Thyroid gland (tissue), 4 donors: ENCODE measurements at regions of chr20 and their contacts with region 1.

Region 1: GRCh38 chr20:32456869-32457478 is 98.8 kb downstream of the ASXL1 start:
- DNase-seq: peak; percentile 58 to 61
- H3K4me3 ChIP-seq: peak overlapping the region in 1 of 3 donors; percentile 37
- H3K27ac ChIP-seq: peak overlapping the region in 2 of 3 donors; percentile 35 to 46
- H3K4me1 ChIP-seq: peaks cover 15 to 17% of the 10 kb centered on the region in 2 donors
- H3K27me3 ChIP-seq: no peaks in the 10 kb centered on the region
- CTCF ChIP-seq: peak; percentile 47 to 90 (median 69)
- POLR2A ChIP-seq: no peak

Region 2: GRCh38 chr20:32207626-32208498 is 249.1 kb before region 1 on chr20 and contains the starts of genes PLAGL2 and POFUT1:
- intact Hi-C with region 1: loop called (anchors 10 kb)
- DNase-seq: peak; percentile 88 to 90
- H3K4me3 ChIP-seq: peak within 1 kb of the TSS; percentile 82 to 90 (median 84)
- H3K27ac ChIP-seq: peak within 1 kb of the TSS; percentile 79 to 90 (median 87)
- H3K4me1 ChIP-seq: peaks cover 42 to 51% of the 10 kb centered on the region in 2 donors
- H3K27me3 ChIP-seq: no peaks in the 10 kb centered on the region
- CTCF ChIP-seq: peak in 3 of 6 experiments; percentile 12 to 37 (median 27)
- POLR2A ChIP-seq: peak in 1 of 2 donors; percentile 88
- total RNA-seq, gene PLAGL2: 6.5 to 11.7 (median 7.3) TPM
- total RNA-seq, gene POFUT1: 35.1 to 40.5 (median 38.5) TPM

Region 3: DNA sequence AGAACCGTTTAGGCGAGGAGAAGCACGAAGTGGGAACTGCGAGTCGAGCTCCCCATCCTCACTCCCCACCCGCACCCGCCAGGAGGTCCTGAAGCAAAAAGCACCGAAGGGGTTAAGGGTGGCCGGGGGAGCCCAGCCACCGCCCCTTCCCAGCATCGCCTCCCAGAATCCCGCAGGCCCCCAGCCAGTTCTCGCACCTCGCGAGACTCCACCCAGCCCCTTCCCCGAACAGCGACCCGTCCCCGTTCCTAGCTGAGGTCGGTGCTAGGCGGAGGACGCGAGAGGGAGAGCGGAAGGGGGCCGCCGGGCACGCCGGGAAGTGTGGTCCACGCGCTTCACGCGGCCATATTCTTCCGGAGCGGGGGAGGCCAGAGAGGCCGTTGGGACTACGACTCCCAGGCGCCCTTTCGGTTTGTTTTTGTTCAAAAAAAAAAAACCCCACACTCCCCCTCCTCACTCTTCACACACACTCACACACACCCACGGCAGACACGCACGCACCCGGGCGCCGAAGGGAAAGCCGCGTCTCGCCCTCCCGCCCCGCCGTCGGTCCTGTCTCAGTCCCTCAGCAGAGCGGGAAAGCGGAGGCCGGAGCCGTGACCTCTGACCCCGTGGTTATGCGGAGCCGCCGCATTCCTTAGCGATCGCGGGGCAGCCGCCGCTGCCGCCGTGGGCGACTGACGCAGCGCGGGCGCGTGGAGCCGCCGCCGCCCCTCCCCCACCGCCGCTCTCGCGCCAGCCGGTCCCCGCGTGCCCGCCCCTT is 98.9 kb before region 1 on chr20 and contains the start of gene ASXL1:
- intact Hi-C with region 1: loop called (anchors 10 kb)
- DNase-seq: peak; percentile 97 to 98
- H3K4me3 ChIP-seq: peak within 1 kb of the TSS; percentile 45 to 89 (median 58)
- H3K27ac ChIP-seq: peak within 1 kb of the TSS; percentile 95 to 97 (median 96)
- H3K4me1 ChIP-seq: peaks cover 30 to 37% of the 10 kb centered on the region in 2 donors
- H3K27me3 ChIP-seq: no peaks in the 10 kb centered on the region
- CTCF ChIP-seq: peak in 1 of 6 experiments; percentile 24
- POLR2A ChIP-seq: peak in 1 of 2 donors; percentile 64
- total RNA-seq, gene ASXL1: 62.1 to 155 (median 67.5) TPM

Region 4: DNA sequence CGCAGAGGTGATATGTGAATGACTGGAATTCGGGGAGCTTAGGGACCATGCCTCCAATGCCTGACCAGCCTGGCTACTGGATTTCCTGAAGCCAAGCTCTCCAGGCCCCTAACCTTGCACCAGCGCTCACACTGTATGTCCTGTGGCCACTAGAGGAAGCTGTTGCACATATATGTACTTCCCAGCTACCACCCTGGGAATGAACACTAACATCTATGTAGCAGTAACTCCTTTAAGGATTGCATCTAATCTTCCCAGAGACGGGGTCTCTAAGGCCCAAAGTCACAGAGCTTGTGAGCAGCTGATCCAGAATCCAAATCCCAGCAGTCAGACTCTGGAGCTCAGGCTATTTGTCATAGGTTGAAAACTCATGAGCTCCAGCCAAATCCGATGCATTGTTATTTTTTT is 805.7 kb after region 1 on chr20:
- intact Hi-C with region 1: no loop called
- DNase-seq: peak; percentile 50 to 60
- H3K4me3 ChIP-seq: no peak overlapping the region
- H3K27ac ChIP-seq: no peak overlapping the region
- H3K4me1 ChIP-seq: no peaks in the 10 kb centered on the region
- H3K27me3 ChIP-seq: no peaks in the 10 kb centered on the region
- CTCF ChIP-seq: peak in 5 of 6 experiments; percentile 31 to 76 (median 69)
- POLR2A ChIP-seq: no peak